ENCODE measurements at regions of chr22 and their contacts with region 1.

Region 1: DNA sequence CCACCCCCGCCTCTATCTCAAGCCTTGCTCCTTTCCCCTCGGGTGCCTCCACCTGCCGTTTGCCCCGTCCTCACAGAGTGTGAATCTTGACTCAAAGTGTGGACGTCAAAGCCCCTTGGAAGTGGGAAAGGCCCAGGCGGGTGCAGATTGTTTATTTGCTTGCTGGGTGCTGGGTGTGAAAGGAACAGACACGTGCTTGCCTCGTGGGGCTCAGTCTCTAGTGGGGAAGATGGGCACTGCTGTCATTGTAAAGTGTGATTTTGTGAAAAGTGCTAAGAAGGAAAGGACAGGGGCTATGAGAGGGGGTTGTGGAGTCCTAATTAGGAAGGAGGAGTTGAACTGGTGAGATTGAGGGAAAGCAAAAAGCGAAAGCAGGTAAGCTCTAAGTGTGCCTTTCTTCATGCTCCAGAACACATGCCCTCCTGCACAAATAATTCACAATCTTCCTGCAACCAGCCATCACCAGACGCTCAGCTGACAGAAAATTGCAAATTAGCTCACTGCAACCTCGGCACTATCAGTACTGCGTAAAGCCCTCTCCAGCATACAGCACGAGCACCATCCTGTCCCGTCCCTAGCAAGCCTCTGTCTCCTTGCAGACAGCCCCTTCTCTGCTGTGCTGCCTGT is 9.7 kb upstream of the GCAT start:
- DNase-seq: no peak
- H3K4me3 ChIP-seq: no peak overlapping the region
- H3K27ac ChIP-seq: no peak overlapping the region
- H3K4me1 ChIP-seq: no peaks in the 10 kb centered on the region
- H3K27me3 ChIP-seq: no peaks in the 10 kb centered on the region
- CTCF ChIP-seq: no peak
- EP300 ChIP-seq: no peak
- POLR2A ChIP-seq: no peak

Region 2: GRCh38 chr22:37643225-37643847 is 154.7 kb before region 1 on chr22:
- intact Hi-C with region 1: loop called in 3 of 4 experiments (anchors 5 to 10 kb)
- DNase-seq: peak; percentile 78 to 93 (median 89)
- H3K4me3 ChIP-seq: no peak overlapping the region
- H3K27ac ChIP-seq: no peak overlapping the region
- H3K4me1 ChIP-seq: peaks cover 2% of the 10 kb centered on the region
- H3K27me3 ChIP-seq: no peaks in the 10 kb centered on the region
- CTCF ChIP-seq: peak; percentile 89 to 94 (median 94)
- EP300 ChIP-seq: no peak
- POLR2A ChIP-seq: no peak

Region 3: DNA sequence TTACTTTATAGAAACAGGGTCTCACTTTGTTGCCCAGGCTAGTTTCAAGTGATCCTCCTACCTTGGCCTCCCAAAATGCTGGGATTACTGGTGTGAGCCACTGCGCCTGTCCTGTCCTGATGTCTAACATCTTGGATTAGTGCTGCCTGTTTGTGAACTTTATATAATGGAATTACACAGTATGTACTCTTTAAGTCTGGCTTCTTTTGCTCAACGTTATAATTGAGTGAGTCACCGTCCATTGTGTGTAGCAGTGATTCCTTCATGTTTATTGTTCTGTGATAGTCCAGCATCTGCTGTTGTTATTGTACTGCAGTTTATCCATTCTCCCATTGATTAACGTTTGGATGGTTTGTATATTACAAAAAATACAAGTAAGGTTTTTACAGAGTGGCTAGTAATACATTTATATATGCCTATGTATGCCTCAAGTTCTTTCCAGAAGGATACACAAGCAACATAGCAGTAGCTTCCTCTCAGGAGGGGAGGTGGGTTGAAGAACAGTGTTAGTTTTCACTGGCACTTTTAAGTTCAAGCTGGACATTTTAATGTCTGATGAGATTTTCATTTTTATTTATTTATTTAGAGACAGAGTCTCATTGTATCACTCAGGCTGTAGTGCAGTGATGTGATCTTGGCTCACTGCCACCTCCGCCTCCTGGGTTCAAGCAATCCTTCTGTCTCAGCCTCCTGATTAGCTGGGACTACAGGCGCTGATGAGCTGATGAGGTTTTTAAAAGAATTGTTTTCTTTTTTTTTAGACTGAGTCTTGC is 82.9 kb after region 1 on chr22:
- intact Hi-C with region 1: no loop called
- DNase-seq: no peak
- H3K4me3 ChIP-seq: no peak overlapping the region
- H3K27ac ChIP-seq: no peak overlapping the region
- H3K4me1 ChIP-seq: no peaks in the 10 kb centered on the region
- H3K27me3 ChIP-seq: no peaks in the 10 kb centered on the region
- CTCF ChIP-seq: no peak
- EP300 ChIP-seq: no peak
- POLR2A ChIP-seq: no peak